ENCODE measurements at regions of chr6 and their contacts with region 1.

Region 1: GRCh38 chr6:160520043-160520904 is 143.8 kb downstream of the LPA start:
- DNase-seq: peak; percentile 82
- ATAC-seq: peak; percentile 95

Region 2: GRCh38 chr6:160417146-160417545 is 103.1 kb before region 1 on chr6:
- intact Hi-C with region 1: no loop called
- DNase-seq: no peak
- ATAC-seq: peak; percentile 73

Region 3: GRCh38 chr6:160534050-160534696 is 13.9 kb after region 1 on chr6:
- intact Hi-C with region 1: loop called (anchors 1 kb)
- DNase-seq: no peak
- ATAC-seq: peak; percentile 70

Region 4: GRCh38 chr6:160662842-160663241 is 142.6 kb after region 1 on chr6:
- intact Hi-C with region 1: no loop called
- DNase-seq: no peak
- ATAC-seq: no peak